ENCODE measurements at regions of chr1 and their contacts with region 1.

Region 1: GRCh38 chr1:39720094-39720999 is 18.3 kb upstream of the PPIE start:
- DNase-seq: peak; percentile 61
- ATAC-seq: peak; percentile 83
- H3K4me3 ChIP-seq: no peak overlapping the region
- H3K27ac ChIP-seq: no peak overlapping the region
- H3K4me1 ChIP-seq: no peaks in the 10 kb centered on the region
- H3K27me3 ChIP-seq: peaks cover 2% of the 10 kb centered on the region; the same call in 1 of the 2 replicates
- CTCF ChIP-seq: peak; percentile 74

Region 2: DNA sequence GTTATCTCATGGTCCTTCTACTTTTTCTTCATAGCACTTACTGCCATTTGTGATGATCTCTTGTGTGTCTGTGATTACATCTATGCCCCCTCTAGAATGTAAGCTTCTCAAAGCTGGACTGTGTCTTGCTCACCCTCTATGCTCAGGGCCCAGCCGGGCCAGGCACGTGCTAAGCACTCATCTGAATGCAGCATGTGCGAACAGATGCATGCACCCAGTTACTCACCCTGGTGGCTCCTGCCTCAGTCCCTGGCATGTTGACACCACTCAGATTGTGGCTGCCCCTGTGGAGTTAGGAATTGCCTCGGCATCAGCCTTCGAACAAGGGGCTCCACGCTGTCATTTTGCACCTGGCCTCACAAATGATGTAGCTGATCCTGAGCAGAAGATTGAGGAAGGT is 124.2 kb before region 1 on chr1:
- CTCF ChIA-PET with region 1: no interaction called
- POLR2A ChIA-PET with region 1: no interaction called
- in situ Hi-C with region 1: no loop called
- intact Hi-C with region 1: loop called (anchors 5 kb)
- DNase-seq: no peak
- ATAC-seq: no peak
- H3K4me3 ChIP-seq: no peak overlapping the region
- H3K27ac ChIP-seq: no peak overlapping the region
- H3K4me1 ChIP-seq: no peaks in the 10 kb centered on the region
- H3K27me3 ChIP-seq: no peaks in the 10 kb centered on the region
- CTCF ChIP-seq: no peak

Region 3: DNA sequence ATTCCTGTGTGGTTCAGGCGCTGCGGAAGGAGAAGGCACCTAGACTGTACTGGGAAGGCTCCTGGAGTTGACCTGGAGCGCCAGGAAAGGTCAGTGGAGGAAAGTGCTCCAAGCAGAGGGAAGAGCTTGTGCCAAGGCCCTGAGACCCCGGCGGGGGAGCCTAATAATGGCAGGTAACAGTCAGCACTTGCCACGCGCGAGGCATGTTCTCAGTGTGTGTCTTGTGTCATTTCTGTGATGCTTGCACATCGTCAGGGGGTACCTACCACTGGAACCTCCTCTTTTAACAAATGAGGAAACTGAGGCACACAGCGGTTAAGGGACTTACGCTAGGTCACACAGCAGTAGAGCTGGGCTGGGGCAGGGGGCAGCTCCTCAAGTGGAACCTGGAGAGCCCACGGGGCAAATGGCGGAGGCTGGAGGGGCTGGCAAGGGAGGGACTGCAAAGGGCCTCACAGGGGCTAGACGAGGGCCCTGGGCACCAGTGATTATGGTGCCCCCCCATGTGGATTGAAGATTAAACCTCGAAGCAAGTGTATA is 69.3 kb after region 1 on chr1:
- CTCF ChIA-PET with region 1: no interaction called
- POLR2A ChIA-PET with region 1: no interaction called
- in situ Hi-C with region 1: no loop called
- intact Hi-C with region 1: no loop called
- DNase-seq: no peak
- ATAC-seq: no peak
- H3K4me3 ChIP-seq: peak overlapping the region; percentile 54 to 55
- H3K27ac ChIP-seq: peak overlapping the region; percentile 29; the same call in 1 of the 2 replicates
- H3K4me1 ChIP-seq: no peaks in the 10 kb centered on the region
- H3K27me3 ChIP-seq: no peaks in the 10 kb centered on the region
- CTCF ChIP-seq: no peak

Region 4: DNA sequence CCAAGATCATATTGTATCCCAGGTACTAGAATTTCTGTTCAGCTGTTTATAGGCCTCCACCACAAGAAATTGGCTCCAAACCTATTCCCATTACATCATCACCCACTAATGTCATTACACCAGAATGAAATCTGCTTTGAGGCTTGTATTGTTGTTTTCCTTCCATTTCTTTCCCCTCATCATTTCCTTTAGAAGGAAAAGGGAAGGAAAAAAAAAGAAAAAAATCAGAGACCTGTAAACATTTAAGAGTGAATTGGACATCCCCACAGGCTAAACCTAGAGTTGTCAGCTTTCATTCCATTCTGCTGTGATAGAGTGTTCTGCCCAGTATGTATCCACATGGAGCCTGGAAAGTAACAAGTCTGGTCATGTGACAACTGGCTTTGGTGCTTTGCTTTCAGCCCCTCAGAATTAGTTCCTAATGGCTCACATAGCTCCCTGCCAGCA is 1015.8 kb after region 1 on chr1:
- CTCF ChIA-PET with region 1: no interaction called
- POLR2A ChIA-PET with region 1: no interaction called
- in situ Hi-C with region 1: no loop called
- intact Hi-C with region 1: no loop called
- DNase-seq: no peak
- ATAC-seq: no peak
- H3K4me3 ChIP-seq: no peak overlapping the region
- H3K27ac ChIP-seq: no peak overlapping the region
- H3K4me1 ChIP-seq: peaks cover 5% of the 10 kb centered on the region; the same call in 1 of the 2 replicates
- H3K27me3 ChIP-seq: no peaks in the 10 kb centered on the region
- CTCF ChIP-seq: no peak

Measured in Panc1 (cell line).